ENCODE measurements at regions of chr11 and their contacts with region 1.

Region 1: DNA sequence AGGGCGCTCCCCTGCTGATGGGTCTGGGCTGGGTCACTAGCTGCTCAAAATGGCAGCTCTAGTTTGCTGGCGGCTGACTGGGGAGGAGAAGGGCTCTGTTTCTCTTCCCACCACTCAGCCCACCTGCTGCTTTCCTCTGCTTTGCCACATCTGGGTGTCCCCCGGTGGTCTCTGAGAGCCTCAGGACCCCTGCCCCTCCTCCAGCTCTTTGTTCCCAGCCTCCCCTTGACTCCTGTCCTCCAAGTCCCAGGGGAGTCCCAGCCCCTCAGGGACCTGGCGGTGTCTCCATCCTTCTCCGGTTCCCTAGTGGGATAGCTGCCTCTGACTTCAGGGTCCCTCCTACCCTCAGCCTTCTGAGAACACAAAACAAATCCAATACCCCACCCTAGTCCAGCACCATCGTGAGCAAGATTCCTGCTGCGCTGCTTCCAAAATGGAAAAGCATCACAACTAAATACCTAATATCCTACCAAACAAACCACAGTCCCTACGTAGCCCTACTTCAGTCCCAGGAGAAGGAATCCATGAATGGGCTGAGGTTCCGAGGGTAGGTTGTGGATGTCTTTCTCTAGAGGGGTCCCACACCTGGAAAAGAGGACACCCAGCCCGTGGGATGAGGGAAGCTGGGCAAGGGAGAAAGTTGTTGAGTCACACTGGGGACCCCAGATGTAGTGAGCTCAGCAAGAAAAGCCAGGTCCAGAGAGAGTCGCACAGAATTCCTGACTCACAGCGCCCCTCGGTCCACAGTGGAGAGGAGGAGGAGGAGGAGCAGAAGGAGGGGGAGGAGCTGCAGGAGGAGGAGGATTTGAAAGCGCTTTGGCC is 45.0 kb upstream of the NNMT start:
- DNase-seq: no peak
- H3K4me3 ChIP-seq: no peak overlapping the region
- H3K27ac ChIP-seq: no peak overlapping the region
- H3K4me1 ChIP-seq: peaks cover 0 to 5% (median 0%) of the 10 kb centered on the region in 4 experiments; a peak in 2 of 7 replicates
- H3K27me3 ChIP-seq: no peaks in the 10 kb centered on the region
- CTCF ChIP-seq: no peak
- EP300 ChIP-seq: no peak
- POLR2A ChIP-seq: no peak
- RAD21 ChIP-seq: no peak

Region 2: DNA sequence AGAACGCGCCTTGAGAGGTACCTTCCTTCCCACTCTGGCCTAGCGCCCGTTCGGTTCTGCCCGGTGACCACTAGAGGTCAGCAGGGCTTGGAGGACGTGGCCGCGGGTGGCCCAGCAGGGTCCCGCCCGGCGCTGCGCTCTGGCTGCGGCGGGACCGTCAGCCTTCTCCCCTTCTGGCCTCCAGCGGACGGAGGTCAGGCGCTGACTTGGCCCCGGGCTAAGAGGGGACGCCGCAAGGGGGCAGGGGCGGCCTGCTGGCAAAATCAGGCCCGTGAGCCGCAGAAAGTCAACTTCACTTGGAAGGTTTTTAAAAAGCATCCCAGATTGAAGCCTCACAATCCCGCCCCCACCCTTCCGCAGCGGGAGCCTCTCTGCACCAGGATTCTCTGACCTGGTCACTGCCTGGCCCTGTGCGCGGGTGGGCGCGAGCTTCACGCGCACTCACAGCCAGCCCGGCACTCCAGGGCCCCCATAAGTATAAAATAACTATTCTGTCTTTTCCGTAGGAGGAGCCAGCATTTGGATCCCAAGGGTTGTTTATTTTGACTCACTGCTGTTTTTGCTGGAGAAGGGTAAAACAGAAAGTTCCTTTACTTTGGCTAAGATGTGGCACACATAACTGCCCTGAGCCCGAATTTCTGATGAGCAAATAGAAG is 214.9 kb before region 1 on chr11:
- CTCF ChIA-PET with region 1: interaction called, 183 read pairs
- POLR2A ChIA-PET with region 1: no interaction called
- DNase-seq: peak; percentile 86 to 90
- H3K4me3 ChIP-seq: peak overlapping the region in 1 of 4 experiments; percentile 43; a peak in 2 of 8 replicates
- H3K27ac ChIP-seq: no peak overlapping the region
- H3K4me1 ChIP-seq: no peaks in the 10 kb centered on the region
- H3K27me3 ChIP-seq: peaks cover 0 to 3% (median 0%) of the 10 kb centered on the region in 4 experiments; a peak in 2 of 7 replicates
- CTCF ChIP-seq: peak; percentile 70 to 98 (median 96)
- EP300 ChIP-seq: 0 out of 3 replicates have a peak, but pooled peaks of 1 of the 2 experiments have one; percentile 56
- POLR2A ChIP-seq: no peak
- RAD21 ChIP-seq: peak; percentile 81 to 87

Region 3: GRCh38 chr11:114233755-114234154 is 17.4 kb before region 1 on chr11:
- CTCF ChIA-PET with region 1: interaction called, 256 read pairs
- POLR2A ChIA-PET with region 1: no interaction called
- DNase-seq: no peak
- H3K4me3 ChIP-seq: no peak overlapping the region
- H3K27ac ChIP-seq: no peak overlapping the region
- H3K4me1 ChIP-seq: peaks cover 0 to 6% (median 2%) of the 10 kb centered on the region in 4 experiments; a peak in 4 of 7 replicates
- H3K27me3 ChIP-seq: peaks cover 0 to 13% (median 5%) of the 10 kb centered on the region in 4 experiments; a peak in 3 of 7 replicates
- CTCF ChIP-seq: no peak
- EP300 ChIP-seq: no peak
- POLR2A ChIP-seq: no peak
- RAD21 ChIP-seq: no peak

Region 4: GRCh38 chr11:114288139-114288538 is 36.9 kb after region 1 on chr11:
- CTCF ChIA-PET with region 1: no interaction called
- POLR2A ChIA-PET with region 1: no interaction called
- DNase-seq: no peak
- H3K4me3 ChIP-seq: no peak overlapping the region
- H3K27ac ChIP-seq: no peak overlapping the region
- H3K4me1 ChIP-seq: no peaks in the 10 kb centered on the region
- H3K27me3 ChIP-seq: no peaks in the 10 kb centered on the region
- CTCF ChIP-seq: no peak
- EP300 ChIP-seq: no peak
- POLR2A ChIP-seq: no peak
- RAD21 ChIP-seq: no peak

Measured in H1 (cell line).